Heart left ventricle (tissue), 16 donors: ENCODE measurements at regions of chr4 and their contacts with region 1.

Region 1: DNA sequence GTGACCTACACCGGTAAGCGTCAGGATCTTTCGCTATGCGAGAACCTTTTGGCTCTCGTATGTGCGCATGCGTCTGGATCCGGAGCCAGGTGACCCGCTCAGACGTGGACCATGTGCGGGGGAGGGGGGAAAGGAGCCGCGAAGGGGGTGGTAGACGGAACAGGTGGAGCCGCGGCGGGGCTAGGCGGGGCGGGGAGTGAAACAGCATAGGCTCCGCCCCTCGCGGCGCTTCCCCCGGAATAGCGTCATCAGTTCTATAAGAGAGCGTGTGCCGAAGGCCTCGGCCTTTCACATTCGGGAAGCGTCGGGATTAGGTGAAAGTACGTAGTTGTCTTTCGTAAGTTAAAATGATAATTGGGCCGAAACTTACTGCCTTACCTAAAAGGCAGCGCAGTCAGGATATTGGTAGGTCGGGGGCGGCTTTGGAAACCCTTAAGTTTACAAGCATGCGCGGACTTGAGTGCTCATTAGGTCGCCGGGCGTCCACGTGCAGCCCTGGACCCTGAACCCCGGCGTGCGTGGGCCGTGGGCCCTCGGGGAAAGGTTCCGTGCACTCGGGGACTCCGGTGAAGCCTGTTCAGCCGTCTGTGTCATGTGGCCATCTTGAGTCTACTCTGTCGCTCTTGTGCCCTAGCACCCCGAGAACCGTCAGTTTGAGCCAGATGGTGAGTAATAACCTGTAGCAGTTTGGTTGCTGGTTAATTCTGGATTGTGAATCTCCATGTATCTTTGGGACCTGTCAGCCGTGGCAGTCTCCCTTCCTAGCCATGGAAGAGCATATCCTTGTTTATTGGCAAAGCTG is 74.1 kb downstream of the PRSS12 start:
- DNase-seq: peak; percentile 92 to 97 (median 95)
- ATAC-seq: peak; percentile 99
- H3K4me3 ChIP-seq: peak overlapping the region; percentile 50 to 82 (median 76)
- H3K27ac ChIP-seq: peak overlapping the region; percentile 86 to 94 (median 90)
- H3K4me1 ChIP-seq: peaks cover 3 to 29% (median 20%) of the 10 kb centered on the region in 12 donors
- H3K27me3 ChIP-seq: no peaks in the 10 kb centered on the region
- CTCF ChIP-seq: no peak
- POLR2A ChIP-seq: peak; percentile 51 to 88

Region 2: GRCh38 chr4:118352843-118353533 is 74.3 kb after region 1 on chr4 and contains the start of gene PRSS12:
- intact Hi-C with region 1: loop called in 3 of 10 experiments (anchors 2 to 5 kb)
- DNase-seq: peak; percentile 21 to 75 (median 39)
- ATAC-seq: peak in 3 of 4 donors; percentile 45 to 92 (median 87)
- H3K4me3 ChIP-seq: peak within 1 kb of the TSS; percentile 3 to 58 (median 40)
- H3K27ac ChIP-seq: no peak within 1 kb of the TSS
- H3K4me1 ChIP-seq: peaks cover 0 to 17% (median 7%) of the 10 kb centered on the region in 12 donors
- H3K27me3 ChIP-seq: peaks cover 25 to 77% (median 48%) of the 10 kb centered on the region in 9 donors
- CTCF ChIP-seq: peak; percentile 38 to 72 (median 56)
- POLR2A ChIP-seq: no peak
- total RNA-seq, gene PRSS12: 0.08 to 0.14 TPM in 2 of 9 donors, not detected in the others

Region 3: GRCh38 chr4:118373614-118374255 is 95.1 kb after region 1 on chr4:
- intact Hi-C with region 1: no loop called
- DNase-seq: no peak
- ATAC-seq: no peak
- H3K4me3 ChIP-seq: no peak overlapping the region
- H3K27ac ChIP-seq: no peak overlapping the region
- H3K4me1 ChIP-seq: no peaks in the 10 kb centered on the region
- H3K27me3 ChIP-seq: no peaks in the 10 kb centered on the region
- CTCF ChIP-seq: no peak
- POLR2A ChIP-seq: no peak

Region 4: DNA sequence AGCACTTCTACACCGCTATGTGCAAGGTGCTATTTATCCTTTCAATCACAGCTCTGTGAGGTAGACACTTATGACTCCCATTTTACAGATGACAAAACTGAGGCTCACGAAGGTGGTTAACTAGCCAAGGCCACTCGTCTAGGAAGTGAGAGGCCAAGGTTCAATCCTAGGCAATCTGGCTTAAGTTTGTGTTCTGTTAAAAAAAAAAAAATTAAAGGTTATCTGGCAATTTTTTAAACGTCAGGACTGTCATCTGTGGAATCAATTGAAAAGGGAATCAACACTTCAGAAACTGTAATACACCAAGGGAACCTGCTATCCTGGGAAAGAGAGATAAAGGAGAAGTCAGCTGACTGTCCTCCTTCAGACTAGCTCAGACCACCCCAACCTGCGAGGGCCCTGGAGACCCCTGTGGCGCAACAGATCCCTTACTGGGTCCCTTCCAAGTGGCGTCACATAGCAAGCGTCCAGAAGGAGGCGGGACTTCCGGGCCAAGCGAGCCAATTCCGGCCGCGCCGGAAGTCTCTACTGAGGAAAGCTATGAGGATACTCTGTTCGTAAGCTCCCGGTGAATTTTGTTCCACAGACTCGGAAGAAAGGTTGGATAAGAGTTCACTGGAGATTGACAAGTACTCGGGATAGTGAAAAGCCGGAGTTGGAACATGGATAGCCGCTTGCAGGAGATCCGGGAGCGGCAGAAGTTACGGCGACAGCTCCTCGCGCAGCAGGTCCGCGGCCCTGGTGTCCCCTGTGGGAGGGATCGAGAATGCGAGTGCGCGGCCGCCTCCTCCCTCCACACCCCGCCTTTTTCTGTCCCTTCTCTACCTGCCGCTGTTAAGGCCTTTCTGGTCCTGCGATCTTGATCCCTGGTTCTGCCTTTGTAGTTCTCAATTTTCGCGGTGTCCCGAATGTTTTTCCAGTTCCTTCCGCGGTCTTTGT is 406.5 kb after region 1 on chr4 and contains the start of gene METTL14:
- intact Hi-C with region 1: loop called in 3 of 10 experiments (anchors 2 to 10 kb)
- DNase-seq: peak; percentile 92 to 95 (median 94)
- ATAC-seq: peak; percentile 96 to 99 (median 98)
- H3K4me3 ChIP-seq: peak within 1 kb of the TSS; percentile 38 to 84 (median 70)
- H3K27ac ChIP-seq: peak within 1 kb of the TSS; percentile 82 to 97 (median 88)
- H3K4me1 ChIP-seq: peaks cover 4 to 19% (median 17%) of the 10 kb centered on the region in 12 donors
- H3K27me3 ChIP-seq: no peaks in the 10 kb centered on the region
- CTCF ChIP-seq: peak in 4 of 12 donors; percentile 6 to 31 (median 19)
- POLR2A ChIP-seq: peak in 1 of 2 donors; percentile 68
- total RNA-seq, gene METTL14: 20.9 to 44.5 (median 27.5) TPM